ENCODE measurements at regions of chr7 and their contacts with region 1.

Region 1: DNA sequence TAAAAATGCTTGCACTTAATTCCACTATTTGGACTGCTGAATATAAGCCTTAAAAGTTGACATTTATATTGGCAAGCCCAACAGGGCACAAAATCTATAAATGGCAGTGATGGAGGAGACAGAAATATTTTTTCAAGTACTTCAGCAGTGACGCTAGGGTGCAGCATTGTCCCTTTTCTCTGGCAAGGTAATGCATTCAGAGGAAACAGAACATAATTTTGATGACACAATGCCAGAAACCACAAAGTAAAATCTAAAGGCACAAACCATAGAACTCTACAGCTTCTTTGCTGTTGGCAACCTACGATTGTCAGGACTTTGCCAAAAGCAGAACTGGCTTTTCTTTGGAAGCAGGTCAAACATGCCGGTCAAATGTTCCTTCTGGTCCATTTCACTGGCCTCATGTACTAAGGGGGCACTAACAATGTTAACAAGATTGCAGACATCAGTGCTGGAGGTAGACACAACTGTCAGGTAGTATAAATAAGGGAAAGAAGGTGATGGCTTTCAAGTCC is 30.9 kb upstream of the FAM133B start:
- DNase-seq: no peak
- ATAC-seq: peak; percentile 76

Region 2: GRCh38 chr7:92698237-92698841 is 77.3 kb after region 1 on chr7:
- intact Hi-C with region 1: loop called (anchors 2 kb)
- DNase-seq: no peak
- ATAC-seq: peak; percentile 67

Region 3: GRCh38 chr7:92880212-92881090 is 259.4 kb after region 1 on chr7:
- intact Hi-C with region 1: loop called (anchors 5 kb)
- DNase-seq: no peak
- ATAC-seq: peak; percentile 34

Region 4: GRCh38 chr7:92988051-92988450 is 367.0 kb after region 1 on chr7:
- intact Hi-C with region 1: loop called (anchors 5 kb)
- DNase-seq: no peak
- ATAC-seq: no peak

Region 5: GRCh38 chr7:93055543-93056107 is 434.5 kb after region 1 on chr7:
- intact Hi-C with region 1: loop called (anchors 1 kb)
- DNase-seq: no peak
- ATAC-seq: no peak

Measured in Right ventricle myocardium inferior (tissue), 1 donor.